ENCODE measurements at regions of chr3 and their contacts with region 1.

Region 1: DNA sequence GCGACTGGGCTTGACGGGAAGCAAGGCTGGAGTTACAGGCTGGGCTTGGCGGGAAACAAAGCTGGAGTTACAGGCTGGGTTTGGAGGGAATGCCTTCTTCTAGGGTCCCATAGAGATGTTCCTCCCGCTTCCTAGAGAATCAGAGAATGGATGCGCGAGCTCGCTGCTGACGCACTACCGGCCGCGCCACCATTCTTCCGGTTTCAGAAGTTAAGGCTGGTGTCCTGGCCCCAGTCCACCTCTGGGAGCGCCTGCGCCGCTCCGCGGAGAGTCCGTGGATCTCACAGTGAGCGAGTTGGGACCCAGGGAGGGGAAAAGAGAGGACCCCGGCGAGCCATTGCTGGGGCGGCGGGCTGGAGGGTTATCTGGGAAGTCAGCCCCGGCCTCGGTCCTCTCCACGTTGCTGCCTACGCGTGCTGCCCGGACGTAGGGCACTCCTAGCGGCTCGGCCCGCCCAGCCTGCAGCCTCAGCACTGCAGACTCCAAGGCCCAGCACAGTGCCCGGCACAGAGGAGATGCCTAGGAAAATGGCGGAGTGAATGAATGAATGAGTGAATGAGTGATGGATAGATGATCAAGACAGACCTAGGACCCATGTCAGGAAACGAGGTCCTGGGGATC is at the start of gene ZNF502:
- DNase-seq: peak; percentile 80 to 83
- H3K4me3 ChIP-seq: peak within 1 kb of the TSS; percentile 67
- H3K4me3 Mint-ChIP-seq: peak within 1 kb of the TSS; percentile 87
- H3K27ac Mint-ChIP-seq: peak within 1 kb of the TSS; percentile 85
- H3K4me1 ChIP-seq: no peaks in the 10 kb centered on the region
- H3K4me1 Mint-ChIP-seq: no peaks in the 10 kb centered on the region
- H3K27me3 ChIP-seq: no peaks in the 10 kb centered on the region
- H3K27me3 Mint-ChIP-seq: no peaks in the 10 kb centered on the region
- CTCF ChIP-seq: peak in 1 of 2 experiments; percentile 36
- total RNA-seq, gene ZNF502: 2.0 TPM in 2 replicates

Region 2: GRCh38 chr3:44529927-44530326 is 182.6 kb before region 1 on chr3:
- CTCF ChIA-PET with region 1: no interaction called
- POLR2A ChIA-PET with region 1: no interaction called
- intact Hi-C with region 1: loop called (anchors 5 kb)
- DNase-seq: peak in 1 of 2 experiments; percentile 7
- H3K4me3 ChIP-seq: no peak overlapping the region
- H3K4me3 Mint-ChIP-seq: no peak overlapping the region
- H3K27ac Mint-ChIP-seq: no peak overlapping the region
- H3K4me1 ChIP-seq: no peaks in the 10 kb centered on the region
- H3K4me1 Mint-ChIP-seq: no peaks in the 10 kb centered on the region
- H3K27me3 ChIP-seq: no peaks in the 10 kb centered on the region
- H3K27me3 Mint-ChIP-seq: peaks cover 1% of the 10 kb centered on the region
- CTCF ChIP-seq: no peak

Region 3: DNA sequence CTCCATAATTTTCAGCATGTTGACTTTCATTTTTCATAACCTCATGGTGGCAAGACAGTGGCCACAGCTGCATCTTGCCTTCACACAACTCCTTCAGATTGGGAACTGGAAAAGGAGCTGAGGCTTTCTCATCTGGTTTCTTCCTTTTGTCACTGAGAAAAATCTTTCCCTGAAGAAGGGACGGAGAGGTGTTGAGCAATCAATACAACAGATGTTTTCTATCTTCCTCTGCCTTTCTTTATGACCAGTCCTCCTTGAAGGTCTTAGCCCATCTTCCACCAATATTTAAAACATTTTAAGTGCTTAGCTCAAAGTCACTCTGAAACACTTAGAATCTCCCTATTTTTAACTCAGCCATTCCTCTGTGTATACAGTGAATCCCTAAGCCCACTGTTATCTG is 115.9 kb before region 1 on chr3:
- CTCF ChIA-PET with region 1: no interaction called
- POLR2A ChIA-PET with region 1: no interaction called
- intact Hi-C with region 1: no loop called
- DNase-seq: no peak
- H3K4me3 ChIP-seq: no peak overlapping the region
- H3K4me3 Mint-ChIP-seq: no peak overlapping the region
- H3K27ac Mint-ChIP-seq: no peak overlapping the region
- H3K4me1 ChIP-seq: no peaks in the 10 kb centered on the region
- H3K4me1 Mint-ChIP-seq: no peaks in the 10 kb centered on the region
- H3K27me3 ChIP-seq: no peaks in the 10 kb centered on the region; the same call in 1 of the 2 replicates
- H3K27me3 Mint-ChIP-seq: peaks cover 2% of the 10 kb centered on the region
- CTCF ChIP-seq: no peak

Measured in Caco-2 (cell line).